Activated CD4-positive, alpha-beta T cell treated with anti-CD3 and anti-CD28 coated beads, Interleukin-2, amount 10 ng/mL, durations not matched to agents 7 days and 5 days (primary cell): ENCODE measurements at regions of chr16 and their contacts with region 1.

Region 1: GRCh38 chr16:23435500-23435899 is 17.5 kb downstream of the COG7 start:
- DNase-seq: peak; percentile 73
- H3K4me3 Mint-ChIP-seq: no peak overlapping the region
- H3K27ac Mint-ChIP-seq: no peak overlapping the region
- H3K4me1 Mint-ChIP-seq: no peaks in the 10 kb centered on the region
- H3K27me3 Mint-ChIP-seq: no peaks in the 10 kb centered on the region

Region 2: DNA sequence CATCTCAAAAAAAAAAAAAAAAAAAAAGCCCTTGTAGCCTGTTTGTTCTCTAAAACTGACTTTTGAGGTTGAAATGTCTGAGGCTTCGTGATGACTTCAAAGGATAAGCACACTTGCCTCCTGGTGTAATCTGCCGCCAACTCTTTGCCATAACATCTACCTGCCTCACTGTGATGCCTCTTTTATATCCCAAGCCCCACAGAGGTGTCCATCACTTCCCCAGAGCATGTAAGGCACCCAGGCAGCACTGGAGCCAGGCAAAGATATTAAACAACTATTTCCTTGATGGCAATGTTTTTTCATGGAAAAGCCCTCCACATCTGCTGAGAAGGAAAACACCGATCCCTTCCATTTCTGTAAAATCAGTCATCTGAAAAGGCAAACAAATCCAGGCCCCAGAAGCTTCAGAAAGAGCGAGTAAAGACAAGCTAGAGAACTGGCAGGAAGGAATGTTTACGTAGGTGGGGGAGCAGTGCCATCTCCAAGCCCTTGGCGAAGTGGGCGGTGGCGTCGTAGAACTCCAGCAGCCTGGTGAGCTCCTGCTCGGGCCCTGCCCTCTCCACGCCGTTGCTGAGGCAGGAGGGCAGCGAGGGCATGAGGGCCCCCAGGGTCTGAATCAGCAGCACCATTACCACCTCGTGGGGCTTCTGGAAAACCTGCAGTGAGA is 11.1 kb before region 1 on chr16:
- CTCF ChIA-PET with region 1: interaction called, 15 read pairs
- POLR2A ChIA-PET with region 1: no interaction called
- DNase-seq: no peak
- H3K4me3 Mint-ChIP-seq: no peak overlapping the region
- H3K27ac Mint-ChIP-seq: no peak overlapping the region
- H3K4me1 Mint-ChIP-seq: no peaks in the 10 kb centered on the region
- H3K27me3 Mint-ChIP-seq: no peaks in the 10 kb centered on the region

Region 3: GRCh38 chr16:23754594-23755483 is 319.3 kb after region 1 on chr16 and contains the start of gene CHP2:
- CTCF ChIA-PET with region 1: no interaction called
- POLR2A ChIA-PET with region 1: no interaction called
- DNase-seq: no peak
- H3K4me3 Mint-ChIP-seq: no peak within 1 kb of the TSS
- H3K27ac Mint-ChIP-seq: no peak within 1 kb of the TSS
- H3K4me1 Mint-ChIP-seq: no peaks in the 10 kb centered on the region
- H3K27me3 Mint-ChIP-seq: peaks cover 63% of the 10 kb centered on the region
- total RNA-seq, gene CHP2: not detected